ENCODE measurements at regions of chr12 and their contacts with region 1.

Region 1: GRCh38 chr12:9464408-9464807 is 143.3 kb downstream of the KLRB1 start:
- DNase-seq: no peak
- H3K4me3 ChIP-seq: no peak overlapping the region
- H3K4me3 Mint-ChIP-seq: no peak overlapping the region
- H3K27ac ChIP-seq: no peak overlapping the region
- H3K27ac Mint-ChIP-seq: no peak overlapping the region
- H3K4me1 ChIP-seq: peaks cover 10% of the 10 kb centered on the region
- H3K4me1 Mint-ChIP-seq: peaks cover 7 to 15% (median 12%) of the 10 kb centered on the region in 4 donors
- H3K27me3 ChIP-seq: no peaks in the 10 kb centered on the region
- H3K27me3 Mint-ChIP-seq: no peaks in the 10 kb centered on the region

Region 2: DNA sequence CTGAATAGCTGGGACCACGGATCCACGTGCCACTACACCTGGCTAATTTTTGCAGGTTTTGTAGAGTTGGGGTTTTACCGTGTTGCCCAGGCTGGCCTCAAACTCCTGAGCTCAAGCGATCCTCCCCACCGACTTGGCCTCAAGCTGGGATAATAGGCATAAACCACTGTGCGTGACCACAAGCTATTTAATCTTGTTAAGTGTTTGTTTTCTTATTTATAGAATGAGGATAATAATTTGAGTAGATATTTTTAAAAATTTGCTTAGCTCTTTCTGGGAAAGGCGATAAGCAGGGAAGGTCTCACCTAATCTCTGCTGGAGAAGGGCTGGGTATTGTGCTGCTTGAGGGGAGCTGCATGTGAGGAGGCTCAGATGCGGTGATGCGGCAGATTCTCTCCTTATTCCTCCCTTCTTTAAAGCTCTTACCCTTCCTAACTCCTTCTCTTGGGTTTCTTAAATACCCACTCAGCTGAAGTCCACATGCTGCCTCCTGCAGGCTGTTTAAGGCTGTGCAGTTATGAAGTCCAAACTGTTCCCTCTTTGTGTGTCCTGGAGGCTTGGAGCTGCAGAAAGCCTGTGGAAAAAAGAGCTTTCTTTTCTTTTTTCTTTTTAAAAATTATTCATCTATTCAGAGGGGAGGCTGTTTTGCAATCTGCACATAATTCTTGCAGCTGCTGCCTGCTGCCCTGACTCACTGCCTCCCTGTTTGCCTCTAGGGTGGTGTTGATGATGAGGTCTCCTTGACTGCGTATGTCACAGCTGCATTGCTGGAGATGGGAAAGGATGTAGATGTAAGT is 604.0 kb before region 1 on chr12:
- CTCF ChIA-PET with region 1: no interaction called
- POLR2A ChIA-PET with region 1: no interaction called
- intact Hi-C with region 1: no loop called
- DNase-seq: peak in 4 of 5 donors; percentile 18 to 28 (median 25)
- H3K4me3 ChIP-seq: no peak overlapping the region
- H3K4me3 Mint-ChIP-seq: no peak overlapping the region
- H3K27ac ChIP-seq: no peak overlapping the region
- H3K27ac Mint-ChIP-seq: no peak overlapping the region
- H3K4me1 ChIP-seq: no peaks in the 10 kb centered on the region
- H3K4me1 Mint-ChIP-seq: no peaks in the 10 kb centered on the region
- H3K27me3 ChIP-seq: no peaks in the 10 kb centered on the region
- H3K27me3 Mint-ChIP-seq: peaks cover 0 to 4% of the 10 kb centered on the region in 2 donors

Region 3: DNA sequence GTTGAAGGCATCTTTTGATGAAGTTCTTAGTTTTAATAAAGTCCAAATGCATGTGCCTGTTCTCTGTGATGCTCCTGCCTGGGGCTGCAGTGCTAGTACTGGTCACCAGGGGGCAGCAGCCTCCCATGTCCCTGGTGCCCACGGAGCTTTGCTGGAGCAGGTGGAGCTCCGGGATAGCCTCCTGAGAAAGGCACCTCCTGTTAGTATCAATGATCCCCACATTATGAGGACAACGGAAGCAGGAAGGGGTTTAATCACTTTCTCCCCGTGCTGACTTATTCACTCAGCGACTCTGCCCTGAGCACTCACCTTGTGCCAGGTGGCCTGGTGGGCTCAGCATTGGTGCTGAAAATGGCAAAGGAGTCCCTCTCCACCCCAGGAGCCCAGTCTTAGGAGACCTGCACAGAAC is 133.2 kb before region 1 on chr12:
- CTCF ChIA-PET with region 1: interaction called, 11 read pairs
- POLR2A ChIA-PET with region 1: no interaction called
- intact Hi-C with region 1: no loop called
- DNase-seq: peak in 4 of 5 donors; percentile 54 to 64 (median 61)
- H3K4me3 ChIP-seq: no peak overlapping the region
- H3K4me3 Mint-ChIP-seq: peak overlapping the region in 1 of 8 donors; percentile 45
- H3K27ac ChIP-seq: no peak overlapping the region
- H3K27ac Mint-ChIP-seq: peak overlapping the region in 2 of 7 donors; percentile 37 to 76
- H3K4me1 ChIP-seq: peaks cover 5% of the 10 kb centered on the region
- H3K4me1 Mint-ChIP-seq: peaks cover 5 to 22% (median 10%) of the 10 kb centered on the region in 4 donors
- H3K27me3 ChIP-seq: no peaks in the 10 kb centered on the region
- H3K27me3 Mint-ChIP-seq: no peaks in the 10 kb centered on the region

Region 4: DNA sequence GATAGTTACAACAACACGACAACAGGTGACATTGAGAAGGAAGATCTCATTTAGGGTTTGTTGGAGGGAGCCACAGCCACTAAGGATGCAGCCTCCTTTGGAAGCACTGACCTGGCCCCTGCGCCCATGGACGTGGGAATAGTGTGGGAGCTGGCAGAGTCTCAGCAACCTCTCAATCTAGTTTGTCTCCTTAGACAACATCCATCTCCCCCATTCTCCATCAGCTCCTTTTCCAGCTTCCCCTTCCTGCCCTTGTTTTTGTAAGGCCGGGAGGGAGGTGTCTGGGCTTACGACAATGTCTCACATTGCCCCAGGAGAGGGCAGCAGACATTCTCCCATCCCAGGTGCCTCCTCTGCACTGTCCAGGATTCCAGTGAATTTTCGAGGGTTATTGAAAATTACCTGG is 86.0 kb before region 1 on chr12:
- CTCF ChIA-PET with region 1: no interaction called
- POLR2A ChIA-PET with region 1: no interaction called
- intact Hi-C with region 1: no loop called
- DNase-seq: no peak
- H3K4me3 ChIP-seq: no peak overlapping the region
- H3K4me3 Mint-ChIP-seq: no peak overlapping the region
- H3K27ac ChIP-seq: no peak overlapping the region
- H3K27ac Mint-ChIP-seq: no peak overlapping the region
- H3K4me1 ChIP-seq: no peaks in the 10 kb centered on the region
- H3K4me1 Mint-ChIP-seq: no peaks in the 10 kb centered on the region
- H3K27me3 ChIP-seq: no peaks in the 10 kb centered on the region
- H3K27me3 Mint-ChIP-seq: peaks cover 0 to 3% of the 10 kb centered on the region in 2 donors

Region 5: DNA sequence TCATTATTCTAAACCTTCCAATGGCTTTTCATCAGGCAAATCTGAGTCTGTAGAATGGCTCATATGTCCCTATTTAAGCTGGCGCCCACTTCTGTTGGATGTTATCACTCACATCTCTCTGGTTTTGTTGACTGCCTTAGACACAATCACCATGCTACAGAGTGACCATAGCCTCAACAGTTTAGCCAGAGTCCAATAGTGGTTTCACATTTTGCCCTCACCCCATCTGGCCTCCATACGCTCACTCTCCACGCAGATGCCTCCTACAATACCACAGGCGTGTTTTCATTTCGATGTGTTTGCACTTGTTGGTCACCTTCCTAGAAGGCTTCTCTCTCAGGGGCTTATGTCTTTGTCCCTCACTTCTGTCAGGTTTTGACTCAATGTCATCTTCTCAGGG is 139.9 kb after region 1 on chr12:
- CTCF ChIA-PET with region 1: no interaction called
- POLR2A ChIA-PET with region 1: no interaction called
- intact Hi-C with region 1: no loop called
- DNase-seq: no peak
- H3K4me3 ChIP-seq: no peak overlapping the region
- H3K4me3 Mint-ChIP-seq: peak overlapping the region; percentile 22 to 74 (median 58)
- H3K27ac ChIP-seq: no peak overlapping the region
- H3K27ac Mint-ChIP-seq: peak overlapping the region in 6 of 7 donors; percentile 6 to 75 (median 45)
- H3K4me1 ChIP-seq: peaks cover 14% of the 10 kb centered on the region
- H3K4me1 Mint-ChIP-seq: peaks cover 14 to 66% (median 43%) of the 10 kb centered on the region in 4 donors
- H3K27me3 ChIP-seq: no peaks in the 10 kb centered on the region
- H3K27me3 Mint-ChIP-seq: no peaks in the 10 kb centered on the region

Measured in CD4-positive, alpha-beta memory T cell (primary cell).